Left ventricle myocardium inferior (tissue), 1 donor: ENCODE measurements at regions of chr1 and their contacts with region 1.

Region 1: GRCh38 chr1:84433258-84434080 is 35.2 kb downstream of the DNASE2B start:
- DNase-seq: no peak
- H3K4me3 ChIP-seq: peak overlapping the region; percentile 52
- H3K27ac ChIP-seq: no peak overlapping the region
- H3K4me1 ChIP-seq: peaks cover 18% of the 10 kb centered on the region
- H3K27me3 ChIP-seq: no peaks in the 10 kb centered on the region
- CTCF ChIP-seq: peak; percentile 79

Region 2: GRCh38 chr1:84143796-84144565 is 289.5 kb before region 1 on chr1 and contains the start of gene PRKACB:
- intact Hi-C with region 1: loop called (anchors 5 kb)
- DNase-seq: no peak
- H3K4me3 ChIP-seq: peak within 1 kb of the TSS; percentile 28
- H3K27ac ChIP-seq: peak within 1 kb of the TSS; percentile 8
- H3K4me1 ChIP-seq: peaks cover 9% of the 10 kb centered on the region
- H3K27me3 ChIP-seq: no peaks in the 10 kb centered on the region
- CTCF ChIP-seq: no peak
- total RNA-seq, gene PRKACB: 34.9 TPM

Region 3: GRCh38 chr1:84353695-84354094 is 79.8 kb before region 1 on chr1:
- intact Hi-C with region 1: no loop called
- DNase-seq: no peak
- H3K4me3 ChIP-seq: no peak overlapping the region
- H3K27ac ChIP-seq: no peak overlapping the region
- H3K4me1 ChIP-seq: no peaks in the 10 kb centered on the region
- H3K27me3 ChIP-seq: no peaks in the 10 kb centered on the region
- CTCF ChIP-seq: no peak

Region 4: DNA sequence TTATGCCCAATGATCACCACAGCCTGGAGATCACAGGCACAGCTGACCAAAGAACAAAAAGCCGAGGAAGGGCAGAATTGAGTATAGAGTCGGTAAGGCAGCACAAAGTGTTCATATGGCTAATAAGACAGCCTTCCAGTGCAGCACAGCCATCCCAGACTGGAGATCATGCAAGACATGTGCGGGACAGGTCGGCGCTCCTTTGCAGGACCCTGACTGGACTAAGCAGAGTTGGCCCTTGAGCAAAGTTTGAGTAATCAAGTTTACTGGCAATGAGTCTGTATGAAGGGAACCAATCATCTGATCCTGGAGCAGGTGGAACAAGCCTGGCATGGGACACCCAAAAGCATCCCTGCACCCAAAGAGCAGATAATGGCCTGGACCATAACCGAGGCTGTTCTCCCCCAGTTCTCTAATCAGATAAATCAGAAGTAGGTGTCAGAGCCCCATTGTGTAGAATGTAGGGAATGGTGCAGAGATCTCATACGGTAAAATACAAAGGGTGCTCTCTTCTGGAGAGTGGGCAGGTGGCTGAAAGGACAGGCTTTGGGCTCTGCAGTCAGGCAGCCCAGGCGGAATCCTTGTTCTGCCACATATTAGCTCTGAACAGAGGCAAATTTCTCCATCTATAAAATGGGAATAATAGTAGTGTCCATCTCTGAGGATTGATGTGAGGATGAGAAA is 45.8 kb before region 1 on chr1:
- intact Hi-C with region 1: no loop called
- DNase-seq: no peak
- H3K4me3 ChIP-seq: no peak overlapping the region
- H3K27ac ChIP-seq: no peak overlapping the region
- H3K4me1 ChIP-seq: no peaks in the 10 kb centered on the region
- H3K27me3 ChIP-seq: no peaks in the 10 kb centered on the region
- CTCF ChIP-seq: no peak

Region 5: GRCh38 chr1:84620720-84621313 is 187.3 kb after region 1 on chr1:
- intact Hi-C with region 1: loop called (anchors 10 kb)
- DNase-seq: peak; percentile 76
- H3K4me3 ChIP-seq: peak overlapping the region; percentile 76
- H3K27ac ChIP-seq: peak overlapping the region; percentile 65
- H3K4me1 ChIP-seq: peaks cover 22% of the 10 kb centered on the region
- H3K27me3 ChIP-seq: peaks cover 5% of the 10 kb centered on the region
- CTCF ChIP-seq: peak; percentile 98

Region 6: GRCh38 chr1:84753516-84754385 is 320.3 kb after region 1 on chr1:
- intact Hi-C with region 1: loop called (anchors 10 kb)
- DNase-seq: peak; percentile 58
- H3K4me3 ChIP-seq: no peak overlapping the region
- H3K27ac ChIP-seq: no peak overlapping the region
- H3K4me1 ChIP-seq: peaks cover 10% of the 10 kb centered on the region
- H3K27me3 ChIP-seq: peaks cover 48% of the 10 kb centered on the region
- CTCF ChIP-seq: peak; percentile 90